Endothelial cell of umbilical vein (primary cell): ENCODE measurements at regions of chr10 and their contacts with region 1.

Region 1: GRCh38 chr10:84537447-84537931 is 209.1 kb downstream of the CCSER2 start:
- DNase-seq: peak; percentile 70
- H3K4me3 ChIP-seq: no peak overlapping the region
- H3K27ac ChIP-seq: no peak overlapping the region
- H3K4me1 ChIP-seq: peaks cover 13% of the 10 kb centered on the region
- H3K27me3 ChIP-seq: no peaks in the 10 kb centered on the region
- CTCF ChIP-seq: peak; percentile 57 to 66
- POLR2A ChIP-seq: no peak

Region 2: DNA sequence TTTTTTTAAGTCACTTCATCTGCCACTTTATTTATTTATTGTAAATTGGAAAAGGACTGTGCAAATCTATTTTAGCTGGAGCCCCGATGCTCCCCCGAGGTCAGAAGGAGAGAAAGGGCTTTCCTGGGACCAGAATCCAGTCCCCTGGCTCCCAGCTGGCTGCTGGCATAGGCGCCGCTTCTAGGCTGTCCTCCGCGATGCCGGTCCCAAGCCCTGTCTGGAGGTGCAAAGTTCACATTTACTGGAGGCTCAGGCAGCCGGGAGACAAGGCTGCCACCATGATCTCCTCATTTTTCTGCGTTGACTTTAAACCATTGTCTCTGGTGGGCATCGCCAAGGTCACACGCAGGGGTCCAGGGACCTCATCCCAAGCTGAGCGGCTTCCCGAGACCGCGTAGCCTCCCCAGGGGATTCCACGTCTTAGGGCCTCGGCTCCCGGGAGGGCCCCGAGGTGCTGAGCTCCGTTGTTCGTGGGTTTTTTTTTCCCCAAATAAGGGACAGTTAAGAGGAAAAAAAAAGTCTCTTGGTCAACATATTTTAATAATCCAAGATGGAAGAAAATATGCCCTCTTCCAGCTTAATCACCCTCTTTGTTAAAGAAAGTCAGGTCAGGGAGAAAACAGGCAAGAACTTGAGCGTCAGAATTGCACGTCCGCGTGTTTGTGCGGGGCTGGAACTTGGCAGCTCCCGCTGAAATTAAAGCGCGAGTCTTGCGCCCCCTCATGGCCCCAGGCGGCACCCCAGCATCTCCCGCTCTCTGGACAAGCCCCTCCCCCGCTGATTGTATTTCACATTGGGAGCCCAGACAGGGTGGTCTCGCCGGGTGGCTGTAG is 280.8 kb before region 1 on chr10:
- CTCF ChIA-PET with region 1: interaction called, 510 read pairs
- POLR2A ChIA-PET with region 1: no interaction called
- dilution Hi-C with region 1: no loop called
- intact Hi-C with region 1: no loop called
- DNase-seq: peak; percentile 46
- H3K4me3 ChIP-seq: no peak overlapping the region
- H3K27ac ChIP-seq: no peak overlapping the region
- H3K4me1 ChIP-seq: no peaks in the 10 kb centered on the region
- H3K27me3 ChIP-seq: peaks cover 4 to 7% of the 10 kb centered on the region in 2 experiments
- CTCF ChIP-seq: peak; percentile 69 to 84
- POLR2A ChIP-seq: no peak

Region 3: DNA sequence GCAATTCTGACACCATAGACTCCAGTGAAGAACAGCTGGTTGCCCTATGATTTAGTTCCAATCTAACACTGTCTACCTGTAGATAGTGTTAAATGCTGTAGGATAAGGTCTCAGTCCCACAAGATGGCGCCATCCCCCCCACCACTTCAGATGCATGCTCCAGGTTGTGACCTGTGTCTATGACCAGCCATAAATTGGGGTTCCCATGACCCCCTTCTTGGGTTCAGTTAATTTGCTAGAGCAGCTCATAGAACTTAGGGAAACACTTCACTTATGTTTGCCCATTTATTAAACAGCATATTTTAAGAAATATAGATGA is 196.0 kb before region 1 on chr10:
- CTCF ChIA-PET with region 1: interaction called, 10 read pairs
- POLR2A ChIA-PET with region 1: no interaction called
- dilution Hi-C with region 1: no loop called
- intact Hi-C with region 1: no loop called
- DNase-seq: no peak
- H3K4me3 ChIP-seq: no peak overlapping the region
- H3K27ac ChIP-seq: no peak overlapping the region
- H3K4me1 ChIP-seq: peaks cover 13% of the 10 kb centered on the region
- H3K27me3 ChIP-seq: no peaks in the 10 kb centered on the region
- CTCF ChIP-seq: no peak
- POLR2A ChIP-seq: no peak

Region 4: GRCh38 chr10:84404783-84405182 is 132.7 kb before region 1 on chr10:
- CTCF ChIA-PET with region 1: no interaction called
- POLR2A ChIA-PET with region 1: no interaction called
- dilution Hi-C with region 1: no loop called
- intact Hi-C with region 1: no loop called
- DNase-seq: no peak
- H3K4me3 ChIP-seq: no peak overlapping the region
- H3K27ac ChIP-seq: no peak overlapping the region
- H3K4me1 ChIP-seq: peaks cover 9% of the 10 kb centered on the region
- H3K27me3 ChIP-seq: no peaks in the 10 kb centered on the region
- CTCF ChIP-seq: no peak
- POLR2A ChIP-seq: no peak

Region 5: DNA sequence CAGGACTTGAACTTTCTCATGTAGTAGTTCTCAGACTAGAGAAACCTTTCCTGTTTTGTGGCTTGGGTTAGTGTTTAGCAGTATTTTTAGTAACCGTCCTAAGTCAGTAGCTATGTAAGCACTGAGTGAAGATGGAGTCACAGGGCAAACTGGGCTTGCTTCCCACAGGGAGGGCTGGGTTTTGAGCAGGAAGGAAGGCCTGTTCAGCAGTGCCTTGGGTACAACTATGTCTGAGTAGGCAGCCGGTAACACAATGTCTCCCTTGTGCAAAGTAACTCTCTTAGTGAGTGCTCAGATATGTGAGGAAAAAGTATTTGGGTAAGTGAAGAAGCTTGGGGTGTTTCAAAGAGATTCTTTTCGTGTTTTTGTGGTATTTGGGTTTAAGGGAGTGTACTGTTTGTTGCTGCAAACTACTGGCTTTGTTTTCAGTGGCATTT is 112.7 kb before region 1 on chr10:
- CTCF ChIA-PET with region 1: interaction called, 190 read pairs
- POLR2A ChIA-PET with region 1: no interaction called
- dilution Hi-C with region 1: no loop called
- intact Hi-C with region 1: no loop called
- DNase-seq: peak; percentile 96
- H3K4me3 ChIP-seq: peak overlapping the region in 2 of 3 experiments; percentile 5 to 64
- H3K27ac ChIP-seq: peak overlapping the region; percentile 69
- H3K4me1 ChIP-seq: peaks cover 15% of the 10 kb centered on the region
- H3K27me3 ChIP-seq: no peaks in the 10 kb centered on the region
- CTCF ChIP-seq: no peak
- POLR2A ChIP-seq: peak; percentile 72

Region 6: GRCh38 chr10:84548869-84549268 is 11.4 kb after region 1 on chr10:
- CTCF ChIA-PET with region 1: interaction called, 22 read pairs
- POLR2A ChIA-PET with region 1: no interaction called
- dilution Hi-C with region 1: no loop called
- intact Hi-C with region 1: no loop called
- DNase-seq: no peak
- H3K4me3 ChIP-seq: no peak overlapping the region
- H3K27ac ChIP-seq: no peak overlapping the region
- H3K4me1 ChIP-seq: no peaks in the 10 kb centered on the region
- H3K27me3 ChIP-seq: peaks cover 2 to 4% of the 10 kb centered on the region in 2 experiments
- CTCF ChIP-seq: peak; percentile 29 to 42
- POLR2A ChIP-seq: no peak

Region 7: GRCh38 chr10:86399879-86400704 is 1862.6 kb after region 1 on chr10:
- CTCF ChIA-PET with region 1: interaction called, 10 read pairs
- POLR2A ChIA-PET with region 1: no interaction called
- dilution Hi-C with region 1: no loop called
- intact Hi-C with region 1: no loop called
- DNase-seq: peak; percentile 88
- H3K4me3 ChIP-seq: peak overlapping the region; percentile 29 to 57 (median 48)
- H3K27ac ChIP-seq: no peak overlapping the region
- H3K4me1 ChIP-seq: peaks cover 23% of the 10 kb centered on the region
- H3K27me3 ChIP-seq: peaks cover 18% of the 10 kb centered on the region in 2 experiments
- CTCF ChIP-seq: peak; percentile 92 to 98
- POLR2A ChIP-seq: no peak